HEK293T (cell line): ENCODE measurements at regions of chr6 and their contacts with region 1.

Region 1: GRCh38 chr6:42771741-42772100 is 10.1 kb upstream of the BICRAL start:
- DNase-seq: no peak

Region 2: GRCh38 chr6:42674780-42675179 is 96.9 kb before region 1 on chr6:
- CTCF ChIA-PET with region 1: no interaction called
- POLR2A ChIA-PET with region 1: no interaction called
- DNase-seq: no peak

Region 3: GRCh38 chr6:42782622-42783176 is 11.0 kb after region 1 on chr6:
- CTCF ChIA-PET with region 1: interaction called, 9 read pairs
- POLR2A ChIA-PET with region 1: interaction called, 33 read pairs
- DNase-seq: peak; percentile 66